ENCODE measurements at regions of chr17 and their contacts with region 1.

Region 1: GRCh38 chr17:76271669-76272540 is 6.8 kb downstream of the UBALD2 start:
- DNase-seq: peak; percentile 95
- ATAC-seq: peak; percentile 57
- H3K4me3 Mint-ChIP-seq: peak overlapping the region; percentile 96
- H3K27ac Mint-ChIP-seq: peak overlapping the region; percentile 98
- H3K4me1 Mint-ChIP-seq: peaks cover 70% of the 10 kb centered on the region
- H3K27me3 Mint-ChIP-seq: no peaks in the 10 kb centered on the region

Region 2: DNA sequence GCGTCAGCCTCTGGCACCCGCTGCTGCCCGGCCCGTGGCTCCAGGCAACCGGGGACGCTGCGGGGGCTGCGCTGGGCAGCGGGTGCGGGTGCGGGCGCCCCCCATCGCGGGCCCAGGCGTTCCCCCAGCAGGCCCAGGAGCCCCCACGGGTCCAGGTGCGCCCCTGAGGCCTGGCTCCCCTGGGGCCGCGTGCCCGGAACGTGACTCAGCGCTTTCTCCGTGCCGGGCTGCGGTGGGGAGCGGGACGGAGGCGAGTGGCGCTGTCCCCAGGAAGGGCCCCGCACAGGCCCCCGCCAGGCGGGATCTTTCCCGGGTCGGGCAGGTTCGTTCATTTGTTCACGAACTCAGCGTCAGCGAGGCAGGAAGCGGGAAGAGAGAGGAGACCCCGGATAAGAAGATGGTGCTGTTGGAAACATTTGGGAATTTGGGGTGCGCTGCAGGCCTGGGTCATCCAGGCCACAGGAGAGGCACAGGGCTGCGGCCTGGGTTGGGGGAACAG is 149.9 kb before region 1 on chr17:
- CTCF ChIA-PET with region 1: interaction called, 13 read pairs
- POLR2A ChIA-PET with region 1: interaction called, 9 read pairs
- intact Hi-C with region 1: no loop called
- DNase-seq: peak; percentile 61
- ATAC-seq: peak; percentile 20
- H3K4me3 Mint-ChIP-seq: no peak overlapping the region
- H3K27ac Mint-ChIP-seq: peak overlapping the region; percentile 80
- H3K4me1 Mint-ChIP-seq: peaks cover 14% of the 10 kb centered on the region
- H3K27me3 Mint-ChIP-seq: no peaks in the 10 kb centered on the region

Region 3: DNA sequence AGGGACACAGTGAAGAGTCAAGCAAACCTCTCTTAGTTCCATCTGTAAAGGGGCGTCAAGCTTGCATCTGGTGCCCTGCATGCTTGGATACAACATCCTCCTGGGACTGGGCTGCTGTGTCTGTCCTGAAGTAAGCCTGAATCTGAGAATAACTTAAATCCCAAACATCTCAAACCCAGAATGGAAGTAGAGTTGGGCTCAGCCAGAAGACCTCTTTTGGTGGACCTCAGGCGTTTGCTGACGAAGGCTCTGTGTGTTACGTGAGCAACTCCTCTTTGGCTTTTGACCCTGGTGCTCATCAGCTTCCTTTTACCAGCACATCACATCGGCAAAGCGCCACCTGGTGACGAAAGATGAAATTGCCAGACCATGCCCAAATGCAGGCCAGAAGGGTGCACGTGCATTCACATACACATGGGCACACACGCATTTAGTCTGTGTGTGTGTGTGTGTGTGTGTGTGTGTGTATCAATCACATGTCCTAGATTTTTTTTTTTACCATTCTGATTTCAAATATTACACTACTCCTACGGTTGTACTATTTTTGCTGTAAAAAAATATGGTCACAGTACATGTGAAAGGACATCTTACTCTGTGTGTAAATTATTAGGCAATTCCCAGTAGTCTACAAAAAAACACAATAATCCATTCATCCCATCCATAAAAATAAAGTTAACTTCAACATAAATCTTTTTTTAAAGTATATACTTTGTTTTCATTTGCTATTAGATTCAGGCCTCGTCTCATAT is 89.7 kb before region 1 on chr17:
- CTCF ChIA-PET with region 1: interaction called, 7 read pairs
- POLR2A ChIA-PET with region 1: interaction called, 29 read pairs
- intact Hi-C with region 1: no loop called
- DNase-seq: peak; percentile 98
- ATAC-seq: peak; percentile 76
- H3K4me3 Mint-ChIP-seq: peak overlapping the region; percentile 6
- H3K27ac Mint-ChIP-seq: peak overlapping the region; percentile 90
- H3K4me1 Mint-ChIP-seq: peaks cover 66% of the 10 kb centered on the region
- H3K27me3 Mint-ChIP-seq: no peaks in the 10 kb centered on the region

Region 4: DNA sequence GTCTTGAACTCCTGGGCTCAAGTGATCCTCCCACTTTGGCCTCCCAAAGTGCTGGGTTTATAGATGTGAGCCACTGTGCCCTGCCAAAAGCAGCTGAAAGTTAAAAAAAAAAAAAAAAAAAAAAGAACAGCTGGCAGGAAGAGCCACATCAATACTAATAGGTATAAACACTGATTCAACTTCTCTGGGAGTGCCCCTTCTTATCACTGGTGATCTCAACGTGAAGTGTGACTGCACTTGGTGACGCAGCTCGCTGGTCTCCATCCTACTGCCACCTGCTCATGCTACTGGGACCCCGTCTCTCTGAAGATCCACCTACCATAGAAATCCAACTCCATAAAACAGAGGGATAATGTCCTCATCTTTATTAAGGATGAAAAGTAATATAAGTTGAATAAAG is 72.4 kb before region 1 on chr17:
- CTCF ChIA-PET with region 1: interaction called, 3 read pairs
- POLR2A ChIA-PET with region 1: interaction called, 10 read pairs
- intact Hi-C with region 1: loop called in 1 of 2 experiments (anchors 1 kb)
- DNase-seq: peak; percentile 81
- ATAC-seq: peak; percentile 91
- H3K4me3 Mint-ChIP-seq: peak overlapping the region; percentile 21
- H3K27ac Mint-ChIP-seq: peak overlapping the region; percentile 92
- H3K4me1 Mint-ChIP-seq: peaks cover 64% of the 10 kb centered on the region
- H3K27me3 Mint-ChIP-seq: no peaks in the 10 kb centered on the region

Region 5: GRCh38 chr17:76246080-76247066 is 25.5 kb before region 1 on chr17:
- CTCF ChIA-PET with region 1: interaction called, 4 read pairs
- POLR2A ChIA-PET with region 1: interaction called, 28 read pairs
- intact Hi-C with region 1: loop called (anchors 1 to 2 kb)
- DNase-seq: peak; percentile 84
- ATAC-seq: peak; percentile 98
- H3K4me3 Mint-ChIP-seq: peak overlapping the region; percentile 53
- H3K27ac Mint-ChIP-seq: peak overlapping the region; percentile 89
- H3K4me1 Mint-ChIP-seq: peaks cover 59% of the 10 kb centered on the region
- H3K27me3 Mint-ChIP-seq: peaks cover 2% of the 10 kb centered on the region

Region 6: DNA sequence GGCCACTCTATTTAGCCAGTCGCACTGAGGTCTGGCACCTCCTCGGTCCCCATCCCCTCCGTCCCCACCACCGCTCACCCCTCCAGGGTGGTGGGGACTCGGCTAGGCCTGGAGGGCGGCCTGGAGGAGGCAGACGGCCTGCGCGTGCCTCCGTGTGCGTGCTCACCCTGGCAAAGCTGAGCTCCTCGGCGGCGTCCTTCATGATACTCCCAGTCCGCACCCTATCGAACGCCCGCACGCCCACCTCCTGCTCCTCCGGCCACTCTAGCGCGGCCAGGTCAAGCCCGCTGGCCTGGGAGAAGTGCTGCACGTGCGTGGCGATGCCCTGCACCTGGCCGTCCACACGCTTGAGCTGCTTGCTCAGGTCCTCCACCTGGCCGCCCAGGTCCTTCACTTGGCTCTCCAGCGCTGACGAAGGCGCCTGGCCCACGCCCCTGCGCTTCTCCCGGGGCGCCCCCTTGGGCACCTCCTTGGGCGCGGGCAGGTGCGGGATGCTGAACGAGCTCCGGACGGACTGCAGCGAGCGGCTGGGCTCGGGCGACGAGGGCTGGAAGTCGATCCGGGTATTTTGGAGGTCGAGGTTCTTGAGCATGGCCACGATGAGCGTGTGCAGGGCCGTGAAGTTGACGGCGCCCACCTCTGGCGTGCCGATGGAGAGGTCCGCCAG is 35.5 kb after region 1 on chr17:
- CTCF ChIA-PET with region 1: no interaction called
- POLR2A ChIA-PET with region 1: no interaction called
- intact Hi-C with region 1: no loop called
- DNase-seq: no peak
- ATAC-seq: no peak
- H3K4me3 Mint-ChIP-seq: no peak overlapping the region
- H3K27ac Mint-ChIP-seq: no peak overlapping the region
- H3K4me1 Mint-ChIP-seq: no peaks in the 10 kb centered on the region
- H3K27me3 Mint-ChIP-seq: no peaks in the 10 kb centered on the region

Measured in activated CD4-positive, alpha-beta T cell treated with anti-CD3 and anti-CD28 coated beads for 36 hours (primary cell).